Activated CD8-positive, alpha-beta memory T cell treated with anti-CD3 and anti-CD28 coated beads, Interleukin-2, amount 10 ng/mL, durations not matched to agents 7 days and 5 days (primary cell): ENCODE measurements at regions of chr11 and their contacts with region 1.

Region 1: GRCh38 chr11:61747192-61747966 is 5.1 kb upstream of the MYRF start:
- DNase-seq: peak; percentile 65
- ATAC-seq: peak; percentile 59
- H3K4me3 Mint-ChIP-seq: no peak overlapping the region
- H3K27ac Mint-ChIP-seq: no peak overlapping the region
- H3K4me1 Mint-ChIP-seq: peaks cover 3% of the 10 kb centered on the region
- H3K27me3 Mint-ChIP-seq: peaks cover 18% of the 10 kb centered on the region

Region 2: GRCh38 chr11:61413496-61413895 is 333.9 kb before region 1 on chr11:
- CTCF ChIA-PET with region 1: no interaction called
- DNase-seq: no peak
- ATAC-seq: no peak
- H3K4me3 Mint-ChIP-seq: no peak overlapping the region
- H3K27ac Mint-ChIP-seq: peak overlapping the region; percentile 37
- H3K4me1 Mint-ChIP-seq: peaks cover 30% of the 10 kb centered on the region
- H3K27me3 Mint-ChIP-seq: no peaks in the 10 kb centered on the region

Region 3: DNA sequence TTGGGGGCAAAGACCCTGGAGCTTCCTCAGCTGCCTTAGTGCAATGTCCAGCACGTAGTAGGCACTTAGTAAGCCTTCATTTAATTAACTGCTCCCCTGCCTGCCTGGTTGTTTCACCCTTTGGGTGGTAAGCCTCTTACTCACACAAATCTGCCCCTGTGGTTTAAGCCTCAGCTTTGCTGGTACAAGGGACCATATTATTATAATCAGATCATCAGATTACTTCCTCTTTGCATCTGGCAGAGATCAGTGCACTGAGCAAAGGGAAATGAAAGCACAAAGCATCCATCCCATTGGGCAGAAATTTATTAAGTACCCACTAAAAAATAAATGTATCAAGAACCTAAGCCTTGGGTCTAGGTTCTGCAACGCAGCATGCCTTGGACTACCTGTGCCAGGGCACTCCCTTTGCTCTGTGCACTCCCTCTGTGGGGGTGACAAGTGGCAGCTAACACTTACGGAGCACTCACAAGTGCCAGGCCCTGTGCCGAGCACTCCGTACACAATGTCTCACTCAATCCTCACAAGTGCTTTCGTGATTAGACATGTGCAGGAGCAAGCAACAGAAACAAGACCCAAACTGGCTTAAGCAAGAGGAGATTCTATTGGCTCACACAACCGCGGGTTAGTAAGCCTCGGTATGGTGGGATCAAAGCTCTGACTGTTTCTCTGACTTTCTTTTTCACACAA is 102.1 kb before region 1 on chr11:
- CTCF ChIA-PET with region 1: no interaction called
- DNase-seq: no peak
- ATAC-seq: no peak
- H3K4me3 Mint-ChIP-seq: no peak overlapping the region
- H3K27ac Mint-ChIP-seq: no peak overlapping the region
- H3K4me1 Mint-ChIP-seq: no peaks in the 10 kb centered on the region
- H3K27me3 Mint-ChIP-seq: peaks cover 3% of the 10 kb centered on the region

Region 4: GRCh38 chr11:61771985-61772455 is 24.6 kb after region 1 on chr11:
- CTCF ChIA-PET with region 1: interaction called, 12 read pairs
- DNase-seq: no peak
- ATAC-seq: no peak
- H3K4me3 Mint-ChIP-seq: no peak overlapping the region
- H3K27ac Mint-ChIP-seq: no peak overlapping the region
- H3K4me1 Mint-ChIP-seq: peaks cover 15% of the 10 kb centered on the region
- H3K27me3 Mint-ChIP-seq: peaks cover 5% of the 10 kb centered on the region

Region 5: DNA sequence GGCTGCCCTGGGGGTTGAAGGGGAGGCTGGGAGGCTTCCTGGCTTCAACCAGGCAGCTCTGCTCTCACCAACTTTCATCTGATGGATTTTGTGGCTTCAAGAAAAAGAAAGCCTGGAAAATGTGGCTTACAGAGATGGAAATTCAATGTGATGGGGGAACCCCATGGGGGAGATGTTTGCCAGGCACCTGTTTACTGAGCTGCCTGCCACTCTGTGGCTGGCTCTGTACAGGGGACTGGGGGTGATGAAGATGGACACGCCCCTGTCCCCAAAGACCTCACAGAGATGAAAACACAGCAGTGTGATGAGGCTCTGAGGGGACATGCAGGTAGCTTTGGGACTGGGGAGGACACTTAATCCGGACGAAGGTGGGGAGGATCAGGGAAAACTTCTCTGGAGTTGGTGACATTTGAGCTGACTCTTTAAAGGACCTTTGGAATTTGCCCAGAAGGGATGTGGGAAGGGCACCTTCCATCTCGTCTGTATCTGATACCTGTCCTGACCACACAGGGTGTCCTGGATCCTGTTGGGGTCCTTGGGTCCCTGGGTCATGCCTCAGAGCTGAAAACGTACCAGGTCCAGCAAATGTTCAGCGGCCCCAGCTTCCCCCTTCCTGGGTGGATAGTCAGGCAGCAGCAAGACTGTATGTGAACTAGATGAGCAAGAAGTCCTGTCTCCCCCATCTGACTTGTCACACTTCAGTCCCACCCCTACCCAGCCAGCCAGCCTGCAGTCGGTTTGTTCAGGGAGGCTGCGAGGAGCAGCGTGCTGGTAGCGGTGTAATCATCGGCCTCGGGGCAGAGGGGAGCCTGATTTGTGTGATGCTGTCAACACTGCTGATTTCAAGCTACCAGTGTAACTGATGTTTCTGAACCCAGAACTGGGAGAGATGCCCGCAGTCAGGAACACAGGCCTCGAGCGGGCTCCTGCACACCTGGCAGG is 35.2 kb after region 1 on chr11:
- CTCF ChIA-PET with region 1: interaction called, 11 read pairs
- DNase-seq: no peak
- ATAC-seq: no peak
- H3K4me3 Mint-ChIP-seq: no peak overlapping the region
- H3K27ac Mint-ChIP-seq: no peak overlapping the region
- H3K4me1 Mint-ChIP-seq: peaks cover 4% of the 10 kb centered on the region
- H3K27me3 Mint-ChIP-seq: peaks cover 4% of the 10 kb centered on the region

Region 6: DNA sequence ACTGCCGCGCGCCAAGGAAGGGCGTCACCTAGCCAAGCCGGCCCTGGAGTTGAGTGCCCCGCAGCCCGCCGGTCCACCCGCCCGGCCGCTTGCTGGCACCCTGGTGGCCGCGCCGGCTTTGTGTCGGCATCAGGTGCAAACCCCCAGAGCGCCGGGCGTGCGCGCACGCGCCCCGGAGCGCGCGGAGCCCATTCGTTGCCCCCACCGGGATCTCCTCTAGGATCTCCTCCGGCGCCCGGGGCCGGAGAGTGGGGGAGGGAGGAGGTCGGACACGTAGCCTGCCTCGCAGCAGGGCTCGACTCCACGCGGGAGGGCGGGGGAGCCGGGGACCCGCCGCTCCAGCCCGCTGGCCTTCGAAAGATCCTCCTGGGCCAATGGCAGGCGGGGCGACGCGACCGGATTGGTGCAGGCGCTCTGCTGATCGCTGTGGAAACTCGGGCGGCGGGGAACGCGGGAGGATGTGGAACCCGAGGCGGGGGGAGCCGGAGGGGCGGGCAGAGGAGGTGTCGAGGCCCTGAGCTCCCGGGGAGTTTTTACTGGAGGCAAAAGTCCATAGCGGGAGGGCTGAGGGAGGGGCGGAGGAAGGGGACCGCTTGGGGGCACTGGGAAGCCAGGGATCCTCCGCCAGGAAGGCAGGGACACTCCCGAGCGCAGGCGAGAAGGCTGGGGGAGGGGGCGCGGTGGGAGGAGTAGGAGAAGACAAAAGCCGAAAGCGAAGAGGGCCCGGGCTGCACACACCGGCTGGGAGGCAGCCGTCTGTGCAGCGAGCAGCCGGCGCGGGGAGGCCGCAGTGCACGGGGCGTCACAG is 80.4 kb after region 1 on chr11 and contains the start of gene FADS2:
- CTCF ChIA-PET with region 1: no interaction called
- DNase-seq: peak; percentile 94
- ATAC-seq: peak; percentile 89
- H3K4me3 Mint-ChIP-seq: peak within 1 kb of the TSS; percentile 85
- H3K27ac Mint-ChIP-seq: peak within 1 kb of the TSS; percentile 90
- H3K4me1 Mint-ChIP-seq: peaks cover 43% of the 10 kb centered on the region
- H3K27me3 Mint-ChIP-seq: peaks cover 17% of the 10 kb centered on the region
- total RNA-seq, gene FADS2: 174 to 184 TPM

Region 7: GRCh38 chr11:61899146-61899841 is 151.9 kb after region 1 on chr11:
- CTCF ChIA-PET with region 1: no interaction called
- DNase-seq: peak; percentile 92
- ATAC-seq: peak; percentile 94
- H3K4me3 Mint-ChIP-seq: no peak overlapping the region
- H3K27ac Mint-ChIP-seq: peak overlapping the region; percentile 55
- H3K4me1 Mint-ChIP-seq: peaks cover 6% of the 10 kb centered on the region
- H3K27me3 Mint-ChIP-seq: peaks cover 3% of the 10 kb centered on the region